AG04450 (cell line): ENCODE measurements at regions of chr2 and their contacts with region 1.

Region 1: GRCh38 chr2:133568172-133568571 is at the start of gene NCKAP5:
- DNase-seq: peak; percentile 43
- H3K4me3 ChIP-seq: peak within 1 kb of the TSS; percentile 67
- H3K27ac ChIP-seq: peak within 1 kb of the TSS; percentile 87
- H3K27me3 ChIP-seq: no peaks in the 10 kb centered on the region
- CTCF ChIP-seq: peak; percentile 51
- polyA plus RNA-seq, gene NCKAP5: 14.8 and 16.6 TPM in 2 replicates

Region 2: DNA sequence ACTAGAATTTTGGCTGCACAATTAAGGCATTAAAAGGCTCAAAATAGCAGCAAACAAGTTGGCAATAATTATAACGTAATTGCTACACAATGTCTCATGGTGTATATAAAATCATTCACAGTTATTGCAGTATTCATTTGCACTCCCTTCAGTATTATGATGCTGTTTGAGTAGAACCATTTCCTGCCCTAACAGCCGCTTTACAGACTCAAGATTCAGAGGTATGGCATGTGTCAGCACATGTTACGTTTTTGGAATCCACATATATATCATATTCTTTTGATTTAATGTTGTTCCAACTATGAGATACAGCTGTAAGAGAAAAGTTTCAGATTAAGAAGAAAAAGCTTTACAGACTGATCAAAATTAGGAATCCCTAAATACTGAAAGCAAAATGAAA is 56.4 kb after region 1 on chr2:
- CTCF ChIA-PET with region 1: no interaction called
- POLR2A ChIA-PET with region 1: no interaction called
- DNase-seq: no peak
- H3K4me3 ChIP-seq: no peak overlapping the region
- H3K27ac ChIP-seq: no peak overlapping the region
- H3K27me3 ChIP-seq: no peaks in the 10 kb centered on the region
- CTCF ChIP-seq: no peak

Region 3: GRCh38 chr2:133755480-133756300 is 187.5 kb after region 1 on chr2:
- CTCF ChIA-PET with region 1: no interaction called
- POLR2A ChIA-PET with region 1: interaction called, 16 read pairs
- DNase-seq: peak; percentile 99
- H3K4me3 ChIP-seq: no peak overlapping the region
- H3K27ac ChIP-seq: peak overlapping the region; percentile 94
- H3K27me3 ChIP-seq: no peaks in the 10 kb centered on the region
- CTCF ChIP-seq: no peak

Region 4: GRCh38 chr2:134431838-134432434 is 863.8 kb after region 1 on chr2:
- CTCF ChIA-PET with region 1: no interaction called
- POLR2A ChIA-PET with region 1: no interaction called
- DNase-seq: no peak
- H3K4me3 ChIP-seq: no peak overlapping the region
- H3K27ac ChIP-seq: peak overlapping the region; percentile 41
- H3K27me3 ChIP-seq: no peaks in the 10 kb centered on the region
- CTCF ChIP-seq: no peak